Ovary (tissue), 10 donors: ENCODE measurements at regions of chr12 and their contacts with region 1.

Region 1: DNA sequence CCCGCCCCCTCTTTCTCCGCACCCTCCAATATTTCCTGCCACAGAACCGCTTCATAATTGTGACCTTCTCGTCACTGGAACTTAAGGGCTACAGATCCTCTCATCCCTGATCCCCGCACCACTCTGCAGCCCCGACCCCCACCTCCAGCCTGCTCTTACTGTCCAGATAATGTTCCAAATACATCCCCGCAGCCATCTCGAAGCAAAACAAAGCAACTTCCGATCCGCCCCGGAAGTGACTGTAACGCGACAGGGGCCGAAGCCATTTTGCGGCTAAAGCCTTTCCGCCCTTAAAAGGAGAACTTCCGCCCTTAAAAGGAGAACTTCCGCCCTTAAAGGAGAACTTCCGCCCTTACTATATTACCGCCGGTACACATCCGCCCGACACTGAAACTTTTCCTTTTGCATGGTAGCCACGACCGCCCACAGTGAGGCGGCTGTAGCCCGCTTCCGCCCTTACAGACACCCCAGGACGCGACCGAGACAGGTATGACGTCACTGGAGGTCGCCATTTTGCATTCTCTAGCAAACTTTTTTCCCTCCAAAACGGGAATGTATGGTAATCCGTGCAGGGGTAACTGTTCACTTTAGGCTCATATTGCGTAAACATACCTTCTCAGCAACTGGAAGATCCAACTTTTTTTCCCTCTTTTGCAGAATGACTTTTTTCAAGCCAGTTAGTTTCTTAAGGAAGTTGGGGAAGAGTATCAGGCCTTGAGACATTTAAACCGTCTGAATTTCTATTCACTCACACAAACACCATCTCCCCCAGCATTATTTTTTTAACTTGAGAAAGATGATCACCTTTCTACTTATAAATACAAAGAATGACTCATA is at the start of gene ING4:
- DNase-seq: peak; percentile 96 to 98 (median 97)
- H3K4me3 ChIP-seq: peak within 1 kb of the TSS; percentile 62
- H3K27ac ChIP-seq: peak within 1 kb of the TSS in 1 of 2 donors; percentile 68
- H3K4me1 ChIP-seq: peaks cover 7% of the 10 kb centered on the region
- H3K27me3 ChIP-seq: no peaks in the 10 kb centered on the region
- CTCF ChIP-seq: peak in 1 of 3 donors; percentile 7
- EP300 ChIP-seq: no peak
- POLR2A ChIP-seq: peak; percentile 33
- total RNA-seq, gene ING4: 26.1 to 39.9 (median 35.0) TPM

Region 2: GRCh38 chr12:6688999-6689882 is 26.1 kb after region 1 on chr12 and contains the start of gene ZNF384:
- intact Hi-C with region 1: loop called in 1 of 4 experiments (anchors 2 kb)
- DNase-seq: peak; percentile 96 to 98 (median 97)
- H3K4me3 ChIP-seq: peak within 1 kb of the TSS; percentile 69
- H3K27ac ChIP-seq: peak within 1 kb of the TSS; percentile 80 to 93
- H3K4me1 ChIP-seq: peaks cover 10% of the 10 kb centered on the region
- H3K27me3 ChIP-seq: no peaks in the 10 kb centered on the region
- CTCF ChIP-seq: peak in 2 of 3 donors; percentile 58
- EP300 ChIP-seq: peak; percentile 83
- POLR2A ChIP-seq: peak; percentile 56
- total RNA-seq, gene ZNF384: 22.1 to 64.9 (median 58.2) TPM

Region 3: DNA sequence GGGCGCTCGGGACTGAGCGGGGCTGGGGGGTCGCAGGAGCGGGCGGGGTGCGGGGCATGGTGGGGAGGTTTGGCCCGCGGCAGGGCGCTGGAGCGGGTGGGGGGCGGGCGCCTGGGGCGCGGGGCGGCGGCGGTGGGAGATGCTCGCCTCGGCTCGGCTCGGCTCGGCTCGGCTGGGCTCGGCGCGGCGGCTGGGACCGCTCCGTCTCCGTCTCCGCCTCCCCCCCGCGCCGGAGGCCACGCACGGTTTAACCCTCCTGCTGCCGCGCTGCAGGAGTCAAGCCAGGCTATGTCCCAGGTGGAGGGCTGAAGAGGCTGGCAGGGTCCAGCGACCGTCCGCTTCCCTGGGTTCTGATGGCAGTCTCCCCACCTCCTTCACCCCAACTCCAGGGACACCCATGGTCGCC is 37.5 kb after region 1 on chr12 and contains the start of gene PIANP:
- intact Hi-C with region 1: no loop called
- DNase-seq: peak in 4 of 5 donors; percentile 25 to 75 (median 61)
- H3K4me3 ChIP-seq: peak within 1 kb of the TSS; percentile 62
- H3K27ac ChIP-seq: no peak within 1 kb of the TSS
- H3K4me1 ChIP-seq: peaks cover 2% of the 10 kb centered on the region
- H3K27me3 ChIP-seq: no peaks in the 10 kb centered on the region
- CTCF ChIP-seq: no peak
- EP300 ChIP-seq: no peak
- POLR2A ChIP-seq: no peak
- total RNA-seq, gene PIANP: 0.11 to 3.1 (median 0.85) TPM in 6 of 7 donors, not detected in the other